AG04449 (cell line): ENCODE measurements at regions of chr7 and their contacts with region 1.

Region 1: DNA sequence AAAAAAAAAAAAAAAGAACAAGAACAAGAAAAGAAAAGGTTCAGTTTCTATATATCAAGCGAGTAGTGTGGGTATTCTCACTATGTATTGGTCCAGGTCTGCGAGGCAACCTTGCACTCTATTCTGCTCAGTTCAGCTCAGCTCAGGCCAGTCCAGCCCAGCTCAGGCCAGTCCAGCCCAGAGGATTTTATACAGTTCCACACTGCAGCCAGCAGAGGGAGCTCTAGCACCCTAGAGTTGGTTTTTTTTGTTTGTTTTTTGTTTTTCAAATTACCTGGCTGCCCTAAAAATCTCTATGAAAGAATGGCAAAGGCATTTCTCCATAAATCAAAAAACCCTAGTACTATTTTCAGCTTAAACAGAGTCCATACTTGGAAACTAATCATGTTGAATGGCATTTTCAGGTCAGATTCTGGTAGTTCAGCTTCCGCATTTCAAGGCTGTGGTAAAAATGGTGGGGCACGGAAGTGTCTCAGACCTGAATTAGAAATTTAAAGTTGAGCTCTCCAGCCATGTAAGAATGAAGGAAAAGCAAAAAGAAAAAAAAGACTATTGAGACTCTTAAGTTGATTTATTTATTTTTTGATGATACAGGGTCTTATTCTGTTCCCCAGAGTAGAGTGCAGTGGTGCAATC is 55.2 kb upstream of the GSDME start:
- DNase-seq: no peak
- H3K4me3 ChIP-seq: no peak overlapping the region
- CTCF ChIP-seq: peak; percentile 69

Region 2: DNA sequence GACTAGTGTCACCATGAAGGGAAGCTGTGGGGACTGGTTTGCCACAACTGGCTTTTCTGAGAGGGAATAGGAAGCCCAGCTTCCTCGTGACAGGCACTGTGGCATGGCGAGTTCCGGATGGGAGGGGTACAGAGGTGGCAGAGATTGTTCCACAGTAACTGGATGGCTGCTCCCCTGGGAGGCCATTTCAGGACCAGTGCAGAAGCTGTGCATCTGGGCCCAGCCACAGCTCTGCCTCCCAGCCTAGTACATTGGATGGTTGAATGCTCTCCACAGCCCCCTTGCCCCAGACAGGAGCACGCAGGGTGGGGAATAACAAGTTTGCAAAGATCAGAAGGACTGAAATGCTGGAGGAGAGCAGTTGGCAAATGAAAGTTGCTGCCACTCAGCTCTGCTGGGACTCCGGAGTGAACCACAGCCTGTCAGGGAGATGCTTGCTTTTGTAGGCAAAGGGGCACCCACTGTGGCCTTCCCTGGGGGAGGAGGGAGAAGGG is 106.9 kb before region 1 on chr7:
- CTCF ChIA-PET with region 1: no interaction called
- POLR2A ChIA-PET with region 1: no interaction called
- DNase-seq: no peak
- H3K4me3 ChIP-seq: no peak overlapping the region
- CTCF ChIP-seq: no peak

Region 3: DNA sequence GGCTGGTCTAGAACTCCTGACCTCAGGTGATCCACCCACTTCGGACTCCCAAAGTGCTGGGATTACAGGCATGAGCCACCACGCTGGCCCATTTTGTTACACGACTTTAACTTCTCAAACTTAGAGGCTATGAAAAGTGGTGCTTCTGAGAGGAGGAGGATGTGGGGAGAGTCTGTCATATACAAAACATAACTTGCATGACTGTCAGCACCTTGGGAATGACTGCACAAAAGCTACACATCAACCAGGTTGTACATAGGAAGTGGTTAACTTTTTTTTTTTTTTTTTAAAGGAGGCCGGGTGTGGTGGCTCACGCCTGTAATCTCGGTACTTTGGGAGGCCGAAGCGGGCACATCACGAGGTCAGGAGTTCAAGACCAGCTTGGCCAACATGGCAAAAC is 11.8 kb before region 1 on chr7:
- CTCF ChIA-PET with region 1: interaction called, 114 read pairs
- POLR2A ChIA-PET with region 1: interaction called, 4 read pairs
- DNase-seq: no peak
- H3K4me3 ChIP-seq: no peak overlapping the region
- CTCF ChIP-seq: no peak

Region 4: DNA sequence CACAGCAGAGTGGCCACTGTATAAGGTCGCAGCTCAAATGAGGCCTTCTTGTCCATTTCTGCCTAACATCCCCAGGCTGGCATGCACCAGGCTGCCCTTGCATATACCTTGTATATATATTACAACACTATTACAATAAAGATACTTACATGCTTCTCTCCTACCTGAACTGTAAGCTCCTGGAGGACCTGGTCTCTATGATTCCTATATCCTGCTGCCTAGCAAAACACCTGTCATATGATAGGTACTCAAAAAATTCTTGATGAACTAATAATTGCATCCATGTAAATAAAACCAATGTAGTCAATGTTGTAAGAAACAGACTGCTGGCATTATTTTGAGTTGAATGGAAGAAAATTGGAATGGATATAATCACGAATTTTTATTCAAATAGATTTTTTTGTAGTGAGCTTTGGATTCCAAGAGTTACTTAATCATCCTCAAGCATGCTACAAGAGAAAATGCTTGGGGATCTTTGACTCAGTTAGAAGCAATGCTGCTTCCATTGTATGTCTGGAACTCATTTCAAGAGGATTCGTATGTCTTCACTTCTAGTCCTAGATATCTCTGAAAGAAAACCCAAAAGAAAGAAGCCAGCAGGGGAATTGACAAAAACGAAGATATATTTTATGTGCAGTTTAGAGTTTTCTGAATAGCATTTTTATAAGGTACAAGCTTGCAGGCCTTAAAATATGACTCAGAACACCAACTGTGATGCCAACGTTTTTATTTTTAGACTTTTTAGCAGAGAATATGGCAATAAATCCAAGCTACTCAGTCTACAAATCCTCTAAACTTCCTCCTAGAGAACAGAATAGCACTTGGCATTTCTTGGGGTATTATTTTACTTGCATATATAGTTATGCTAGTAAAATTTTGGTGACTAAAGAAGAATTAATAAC is 114.4 kb after region 1 on chr7:
- CTCF ChIA-PET with region 1: interaction called, 10 read pairs
- POLR2A ChIA-PET with region 1: no interaction called
- DNase-seq: peak; percentile 87
- H3K4me3 ChIP-seq: no peak overlapping the region
- CTCF ChIP-seq: no peak

Region 5: DNA sequence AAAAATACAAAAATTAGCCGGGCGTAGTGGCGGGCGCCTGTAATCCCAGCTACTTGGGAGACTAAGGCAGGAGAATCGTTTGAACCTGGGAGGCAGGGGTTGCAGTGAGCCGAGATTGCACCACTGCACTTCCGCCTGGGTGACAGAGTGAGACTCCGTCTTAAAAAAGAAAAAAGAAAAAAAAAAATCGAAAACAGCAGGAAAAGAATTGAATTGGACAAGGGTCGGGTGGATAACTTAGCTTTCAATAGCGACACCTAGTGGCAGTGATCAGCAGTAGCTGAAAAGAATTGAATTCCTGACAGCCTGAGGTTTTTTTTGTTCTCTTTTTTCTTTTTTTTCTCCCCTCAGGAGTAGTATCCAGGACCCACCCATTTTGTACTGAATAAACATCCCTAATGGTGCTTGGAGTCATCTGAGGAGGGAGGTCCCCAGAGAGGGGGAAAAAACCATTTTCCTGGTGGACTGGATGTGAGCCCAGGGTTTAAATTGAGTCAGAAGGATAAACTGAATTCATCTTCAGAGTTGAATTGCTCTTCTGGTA is 257.5 kb after region 1 on chr7:
- CTCF ChIA-PET with region 1: interaction called, 129 read pairs
- POLR2A ChIA-PET with region 1: no interaction called
- DNase-seq: no peak
- H3K4me3 ChIP-seq: no peak overlapping the region
- CTCF ChIP-seq: peak; percentile 63